Ovary (tissue), 10 donors: ENCODE measurements at regions of chr6 and their contacts with region 1.

Region 1: DNA sequence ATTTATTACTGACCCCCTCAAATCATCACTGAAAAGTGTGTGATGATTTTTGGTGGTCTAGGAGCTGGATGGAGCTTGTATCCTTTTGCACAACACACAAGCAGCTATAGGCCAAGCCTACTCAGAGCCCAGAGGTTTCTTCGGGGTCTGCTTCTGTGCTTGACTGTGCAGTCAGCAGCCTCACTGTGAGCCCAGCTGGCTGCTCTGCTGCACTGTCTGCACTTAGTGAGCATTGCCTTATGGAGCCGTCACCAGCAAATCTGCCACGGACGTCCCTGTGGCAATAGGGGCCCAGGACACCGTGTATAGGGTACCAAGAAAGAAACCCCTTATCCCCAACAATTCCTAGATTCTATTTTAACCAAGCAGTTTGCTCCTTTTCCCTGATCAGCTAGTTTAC is 38.6 kb upstream of the GMPR start:
- DNase-seq: no peak
- H3K4me3 ChIP-seq: no peak overlapping the region
- H3K27ac ChIP-seq: no peak overlapping the region
- H3K4me1 ChIP-seq: peaks cover 11% of the 10 kb centered on the region
- H3K27me3 ChIP-seq: no peaks in the 10 kb centered on the region
- CTCF ChIP-seq: no peak
- EP300 ChIP-seq: no peak
- POLR2A ChIP-seq: no peak

Region 2: GRCh38 chr6:15698471-15698870 is 501.3 kb before region 1 on chr6:
- intact Hi-C with region 1: loop called in 2 of 4 experiments (anchors 5 kb)
- DNase-seq: no peak
- H3K4me3 ChIP-seq: no peak overlapping the region
- H3K27ac ChIP-seq: no peak overlapping the region
- H3K4me1 ChIP-seq: no peaks in the 10 kb centered on the region
- H3K27me3 ChIP-seq: no peaks in the 10 kb centered on the region
- CTCF ChIP-seq: no peak
- EP300 ChIP-seq: no peak
- POLR2A ChIP-seq: no peak

Region 3: GRCh38 chr6:17542243-17542642 is 1342.4 kb after region 1 on chr6:
- intact Hi-C with region 1: no loop called
- DNase-seq: no peak
- H3K4me3 ChIP-seq: no peak overlapping the region
- H3K27ac ChIP-seq: no peak overlapping the region
- H3K4me1 ChIP-seq: no peaks in the 10 kb centered on the region
- H3K27me3 ChIP-seq: no peaks in the 10 kb centered on the region
- CTCF ChIP-seq: no peak
- EP300 ChIP-seq: no peak
- POLR2A ChIP-seq: no peak